Calu3 (cell line): ENCODE measurements at regions of chr3 and their contacts with region 1.

Region 1: GRCh38 chr3:191329654-191330528 is at the start of gene UTS2B:
- DNase-seq: peak; percentile 66
- H3K4me3 Mint-ChIP-seq: peak within 1 kb of the TSS; percentile 84
- H3K27ac Mint-ChIP-seq: peak within 1 kb of the TSS; percentile 86
- H3K4me1 Mint-ChIP-seq: peaks cover 61% of the 10 kb centered on the region
- H3K27me3 Mint-ChIP-seq: no peaks in the 10 kb centered on the region
- CTCF ChIP-seq: no peak
- total RNA-seq, gene UTS2B: 1.5 and 1.6 TPM in 2 replicates

Region 2: GRCh38 chr3:190762801-190763200 is 567.1 kb before region 1 on chr3:
- CTCF ChIA-PET with region 1: no interaction called
- intact Hi-C with region 1: no loop called
- DNase-seq: no peak
- H3K4me3 Mint-ChIP-seq: no peak overlapping the region
- H3K27ac Mint-ChIP-seq: no peak overlapping the region
- H3K4me1 Mint-ChIP-seq: no peaks in the 10 kb centered on the region
- H3K27me3 Mint-ChIP-seq: no peaks in the 10 kb centered on the region
- CTCF ChIP-seq: no peak

Region 3: GRCh38 chr3:191008074-191008473 is 321.8 kb before region 1 on chr3:
- CTCF ChIA-PET with region 1: no interaction called
- intact Hi-C with region 1: no loop called
- DNase-seq: no peak
- H3K4me3 Mint-ChIP-seq: no peak overlapping the region
- H3K27ac Mint-ChIP-seq: no peak overlapping the region
- H3K4me1 Mint-ChIP-seq: no peaks in the 10 kb centered on the region
- H3K27me3 Mint-ChIP-seq: no peaks in the 10 kb centered on the region
- CTCF ChIP-seq: no peak

Region 4: DNA sequence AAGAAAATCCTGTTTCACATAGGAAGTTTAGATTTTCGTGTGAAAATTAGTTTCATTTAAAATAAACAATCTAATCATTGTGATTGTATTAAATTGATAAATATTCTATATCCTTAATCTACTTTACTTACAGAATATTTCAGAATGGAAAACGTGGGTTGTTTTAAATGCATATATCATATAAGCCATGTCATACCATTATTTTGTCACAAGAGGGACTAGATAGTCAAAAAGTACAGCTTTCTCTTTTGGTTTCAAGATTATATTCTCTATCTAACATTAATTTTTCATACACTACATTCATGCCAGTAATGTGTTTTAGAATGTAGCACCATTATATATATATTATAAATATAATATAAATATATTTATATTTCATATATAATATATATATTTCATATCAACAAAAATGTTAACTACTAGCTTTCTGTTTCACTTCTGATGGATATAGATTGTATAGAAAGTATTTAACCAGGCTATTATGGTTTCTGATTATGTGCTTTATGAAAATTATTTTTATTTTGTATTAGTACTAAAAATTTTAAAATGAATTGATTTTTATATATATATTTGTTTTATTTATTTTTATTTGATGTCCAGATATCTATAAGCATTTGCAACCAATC is 85.5 kb before region 1 on chr3:
- CTCF ChIA-PET with region 1: no interaction called
- intact Hi-C with region 1: loop called (anchors 2 kb)
- DNase-seq: no peak
- H3K4me3 Mint-ChIP-seq: no peak overlapping the region
- H3K27ac Mint-ChIP-seq: no peak overlapping the region
- H3K4me1 Mint-ChIP-seq: peaks cover 27% of the 10 kb centered on the region
- H3K27me3 Mint-ChIP-seq: no peaks in the 10 kb centered on the region
- CTCF ChIP-seq: peak; percentile 54

Region 5: DNA sequence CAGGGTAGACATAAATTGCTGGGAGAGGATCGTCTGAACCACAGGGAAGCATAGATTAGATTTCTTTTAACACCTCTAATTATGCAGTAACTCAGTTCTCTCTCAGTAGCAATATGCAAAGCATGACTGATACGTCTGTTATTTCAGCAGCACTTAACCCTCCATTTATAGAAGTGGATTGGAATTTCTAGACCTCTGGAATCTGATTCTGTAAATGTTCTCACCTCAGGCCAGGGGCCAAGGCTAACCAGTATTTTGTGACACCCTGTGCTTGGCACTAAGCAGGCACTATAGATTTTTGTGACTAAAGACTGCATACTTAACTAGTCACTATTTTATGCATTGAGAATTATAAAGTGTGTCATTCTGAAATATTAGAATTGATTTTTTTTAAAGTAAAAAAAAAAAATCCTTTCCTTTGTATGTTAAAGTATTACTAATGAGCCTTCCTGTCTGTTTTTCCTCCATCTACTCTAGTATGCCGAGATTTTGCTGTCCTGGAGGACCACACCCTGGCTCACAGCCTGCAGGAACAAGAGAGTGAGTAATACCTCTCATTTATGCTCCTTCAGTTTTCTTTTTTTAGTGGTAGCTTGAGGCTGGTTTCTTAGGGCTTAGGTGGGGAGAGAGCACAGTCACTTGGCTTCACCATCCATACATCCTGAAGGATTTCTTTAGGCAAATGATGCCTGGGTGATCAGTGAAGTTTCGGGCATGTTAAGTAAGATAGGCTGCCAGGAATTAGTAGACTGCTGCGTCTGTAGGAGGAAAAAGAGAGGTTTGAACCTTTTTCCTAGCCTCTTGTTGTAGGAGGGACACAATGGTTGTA is 26.9 kb after region 1 on chr3:
- CTCF ChIA-PET with region 1: interaction called, 5 read pairs
- intact Hi-C with region 1: loop called (anchors 1 kb)
- DNase-seq: peak; percentile 68
- H3K4me3 Mint-ChIP-seq: peak overlapping the region; percentile 58
- H3K27ac Mint-ChIP-seq: peak overlapping the region; percentile 76
- H3K4me1 Mint-ChIP-seq: peaks cover 48% of the 10 kb centered on the region
- H3K27me3 Mint-ChIP-seq: no peaks in the 10 kb centered on the region
- CTCF ChIP-seq: no peak

Region 6: DNA sequence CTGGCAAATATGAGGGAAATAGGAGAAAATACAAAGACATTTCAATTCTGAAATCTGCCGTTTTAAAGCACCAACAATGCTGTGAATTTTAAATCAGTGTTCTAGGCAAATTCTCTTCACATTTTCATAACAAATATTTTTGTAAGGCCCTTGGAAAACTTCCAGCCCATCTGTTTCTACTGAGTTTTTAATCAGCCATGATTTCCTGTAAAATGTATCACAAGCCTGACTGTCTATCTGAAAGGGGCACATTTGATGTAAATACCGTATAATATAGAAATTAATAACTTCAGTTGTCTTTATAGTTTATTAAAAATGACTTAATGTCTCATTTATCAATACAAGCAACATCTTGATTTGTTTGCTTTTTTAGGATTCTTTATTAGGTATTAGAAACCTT is 585.8 kb after region 1 on chr3:
- CTCF ChIA-PET with region 1: no interaction called
- intact Hi-C with region 1: no loop called
- DNase-seq: no peak
- H3K4me3 Mint-ChIP-seq: no peak overlapping the region
- H3K27ac Mint-ChIP-seq: no peak overlapping the region
- H3K4me1 Mint-ChIP-seq: no peaks in the 10 kb centered on the region
- H3K27me3 Mint-ChIP-seq: no peaks in the 10 kb centered on the region
- CTCF ChIP-seq: no peak